GM18951 (cell line): ENCODE measurements at regions of chr18 and their contacts with region 1.

Region 1: DNA sequence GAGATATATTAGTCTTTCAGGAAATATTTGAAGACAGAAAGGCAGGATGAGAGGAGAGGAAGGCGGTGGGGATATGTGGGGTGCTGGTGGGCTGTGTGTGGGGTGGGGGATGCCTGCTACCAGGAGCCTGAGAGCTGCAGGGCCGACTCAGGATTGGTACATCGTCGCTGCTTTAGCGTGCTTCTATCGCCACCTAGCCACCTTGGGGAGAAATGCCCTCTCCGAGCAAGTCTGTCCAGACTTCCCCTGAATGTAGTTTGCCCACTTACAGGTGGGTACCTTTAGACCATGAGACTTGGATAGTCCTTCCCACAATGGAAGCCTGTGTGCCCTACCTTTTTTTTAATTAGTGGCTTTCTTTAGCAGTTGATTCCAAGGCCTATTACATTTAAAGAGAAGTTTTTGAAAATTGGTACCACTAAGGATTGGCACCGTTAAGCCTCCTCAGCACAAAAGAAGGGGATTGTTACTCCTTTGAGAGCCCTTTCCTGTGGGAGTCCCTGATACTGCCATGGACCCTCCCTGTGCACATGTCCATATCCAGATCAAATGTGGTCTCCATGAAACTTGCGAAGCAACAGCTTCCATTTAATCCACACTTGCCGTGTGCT is 114.1 kb upstream of the NDUFV2 start:
- POLR2A ChIP-seq: no peak

Region 2: GRCh38 chr18:8654503-8655451 is 333.6 kb before region 1 on chr18:
- in situ Hi-C with region 1: loop called (anchors 25 kb)
- POLR2A ChIP-seq: no peak

Region 3: GRCh38 chr18:8794133-8794986 is 194.0 kb before region 1 on chr18:
- in situ Hi-C with region 1: no loop called
- POLR2A ChIP-seq: no peak